Panc1 (cell line): ENCODE measurements at regions of chr1 and their contacts with region 1.

Region 1: GRCh38 chr1:39026051-39026865 is at the start of gene NDUFS5:
- DNase-seq: peak; percentile 79
- ATAC-seq: peak; percentile 97
- H3K4me3 ChIP-seq: peak within 1 kb of the TSS; percentile 96 to 100
- H3K27ac ChIP-seq: peak within 1 kb of the TSS; percentile 98
- H3K4me1 ChIP-seq: peaks cover 8% of the 10 kb centered on the region; the same call in 1 of the 2 replicates
- H3K27me3 ChIP-seq: no peaks in the 10 kb centered on the region
- CTCF ChIP-seq: no peak
- total RNA-seq, gene NDUFS5: 316 TPM

Region 2: GRCh38 chr1:39183503-39184353 is 157.5 kb after region 1 on chr1:
- CTCF ChIA-PET with region 1: no interaction called
- POLR2A ChIA-PET with region 1: interaction called, 14 read pairs
- in situ Hi-C with region 1: no loop called
- intact Hi-C with region 1: no loop called
- DNase-seq: peak; percentile 96
- ATAC-seq: peak; percentile 77
- H3K4me3 ChIP-seq: no peak overlapping the region
- H3K27ac ChIP-seq: peak overlapping the region; percentile 97
- H3K4me1 ChIP-seq: peaks cover 66% of the 10 kb centered on the region
- H3K27me3 ChIP-seq: no peaks in the 10 kb centered on the region
- CTCF ChIP-seq: peak; percentile 63